ENCODE measurements at regions of chrX and their contacts with region 1.

Region 1: GRCh38 chrX:16771483-16772398 is 14.5 kb upstream of the TXLNG start:
- DNase-seq: peak; percentile 86
- ATAC-seq: peak; percentile 91
- H3K4me3 ChIP-seq: peak overlapping the region; percentile 21 to 40 (median 32); a peak in 4 of 6 replicates
- H3K27ac ChIP-seq: peak overlapping the region; percentile 100
- H3K4me1 ChIP-seq: 0 out of 2 replicates have a peak, but pooled peaks cover 12% of the 10 kb centered on the region
- H3K27me3 ChIP-seq: no peaks in the 10 kb centered on the region
- CTCF ChIP-seq: no peak
- EP300 ChIP-seq: peak in 1 of 2 experiments; percentile 16; a peak in 1 of 4 replicates
- POLR2A ChIP-seq: peak; percentile 94 to 99
- RAD21 ChIP-seq: no peak

Region 2: GRCh38 chrX:16670998-16671397 is 100.7 kb before region 1 on chrX:
- CTCF ChIA-PET with region 1: no interaction called
- POLR2A ChIA-PET with region 1: no interaction called
- in situ Hi-C with region 1: no loop called
- intact Hi-C with region 1: no loop called
- DNase-seq: peak; percentile 5
- ATAC-seq: no peak
- H3K4me3 ChIP-seq: no peak overlapping the region
- H3K27ac ChIP-seq: no peak overlapping the region
- H3K4me1 ChIP-seq: no peaks in the 10 kb centered on the region
- H3K27me3 ChIP-seq: no peaks in the 10 kb centered on the region
- CTCF ChIP-seq: peak; percentile 53
- EP300 ChIP-seq: no peak
- POLR2A ChIP-seq: no peak
- RAD21 ChIP-seq: no peak

Region 3: DNA sequence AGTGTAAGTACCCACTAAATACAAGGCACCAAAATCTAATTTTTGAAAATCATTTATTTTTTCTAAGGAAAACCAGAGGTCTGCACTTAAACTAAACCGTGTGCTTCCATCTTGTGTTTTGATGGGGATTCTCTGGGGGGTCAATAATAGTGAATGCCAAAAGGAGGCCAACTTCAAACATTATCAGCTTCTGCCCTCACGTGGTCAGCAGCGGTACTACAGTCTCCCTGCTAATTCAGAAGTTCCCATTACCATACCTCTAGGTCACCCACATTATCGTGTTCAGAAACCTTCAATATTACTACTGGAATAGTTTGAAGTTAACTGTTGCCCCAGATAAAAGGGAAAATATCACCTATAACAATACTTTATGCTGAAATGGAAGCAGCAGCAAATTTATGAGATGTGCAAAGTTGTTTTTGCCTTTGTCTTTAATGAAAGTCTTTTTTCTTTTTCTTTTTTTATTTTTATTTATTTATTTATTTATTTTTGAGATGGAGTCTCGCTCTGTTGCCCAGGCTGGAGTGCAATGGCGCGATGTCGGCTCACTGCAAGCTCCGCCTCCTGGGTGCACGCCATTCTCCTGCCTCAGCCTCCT is 76.6 kb before region 1 on chrX:
- CTCF ChIA-PET with region 1: no interaction called
- POLR2A ChIA-PET with region 1: interaction called, 13 read pairs
- in situ Hi-C with region 1: no loop called
- intact Hi-C with region 1: no loop called
- DNase-seq: peak; percentile 29
- ATAC-seq: peak; percentile 62; the same call in 2 of the 3 replicates
- H3K4me3 ChIP-seq: no peak overlapping the region
- H3K27ac ChIP-seq: no peak overlapping the region
- H3K4me1 ChIP-seq: peaks cover 15% of the 10 kb centered on the region
- H3K27me3 ChIP-seq: no peaks in the 10 kb centered on the region
- CTCF ChIP-seq: peak; percentile 67
- EP300 ChIP-seq: no peak
- POLR2A ChIP-seq: no peak
- RAD21 ChIP-seq: no peak

Region 4: DNA sequence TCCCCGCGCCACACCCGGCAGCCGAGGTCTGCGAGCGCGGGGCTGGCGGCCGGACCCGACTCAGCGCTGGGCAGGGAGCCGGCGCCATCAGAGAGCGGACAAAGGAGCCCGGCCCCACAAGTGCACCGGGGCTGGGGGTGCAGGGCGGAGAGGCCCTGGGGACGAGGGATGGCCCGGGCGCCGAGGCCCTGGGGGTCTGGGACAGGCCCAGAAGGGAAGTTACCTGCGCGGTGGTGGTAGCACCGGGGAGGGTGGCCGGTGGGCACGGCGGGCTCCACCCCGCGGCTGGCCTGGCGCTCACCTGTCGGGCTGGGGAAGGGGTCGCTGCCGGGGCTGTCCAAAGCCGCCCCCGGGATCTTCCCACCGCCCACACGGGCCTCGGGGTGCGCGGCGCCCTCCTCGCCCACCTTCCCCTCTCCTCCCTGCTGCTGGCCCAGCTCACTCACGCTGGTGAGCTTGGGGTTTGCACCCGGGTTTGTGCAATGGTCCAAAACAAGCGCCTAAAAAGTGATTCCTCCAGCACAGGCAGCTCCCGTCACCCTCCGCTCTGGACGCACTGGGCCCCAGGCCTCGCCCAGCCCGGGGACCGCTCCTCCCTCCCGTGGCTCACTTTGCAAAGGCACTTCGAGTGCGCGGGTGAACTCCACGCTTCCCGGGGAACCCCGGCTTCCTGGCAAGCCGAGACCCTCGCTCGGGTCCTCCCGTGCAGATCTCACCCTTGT is 59.5 kb before region 1 on chrX and contains the start of gene CTPS2:
- CTCF ChIA-PET with region 1: no interaction called
- POLR2A ChIA-PET with region 1: interaction called, 23 read pairs
- in situ Hi-C with region 1: no loop called
- intact Hi-C with region 1: no loop called
- DNase-seq: peak; percentile 39
- ATAC-seq: peak; percentile 96
- H3K4me3 ChIP-seq: peak within 1 kb of the TSS; percentile 77 to 81 (median 77)
- H3K27ac ChIP-seq: peak within 1 kb of the TSS; percentile 90
- H3K4me1 ChIP-seq: peaks cover 32% of the 10 kb centered on the region
- H3K27me3 ChIP-seq: no peaks in the 10 kb centered on the region; a peak in 1 of 5 replicates
- CTCF ChIP-seq: no peak
- EP300 ChIP-seq: no peak
- POLR2A ChIP-seq: peak; percentile 59 to 66; a peak in 3 of 4 replicates
- RAD21 ChIP-seq: no peak
- total RNA-seq, gene CTPS2: 26.1 and 32.2 TPM in 2 replicates

Region 5: GRCh38 chrX:16719334-16720084 is 52.2 kb before region 1 on chrX and contains the start of gene SYAP1:
- CTCF ChIA-PET with region 1: no interaction called
- POLR2A ChIA-PET with region 1: interaction called, 72 read pairs
- in situ Hi-C with region 1: no loop called
- intact Hi-C with region 1: no loop called
- DNase-seq: peak; percentile 92
- ATAC-seq: peak; percentile 96
- H3K4me3 ChIP-seq: peak within 1 kb of the TSS; percentile 73 to 87 (median 81)
- H3K27ac ChIP-seq: peak within 1 kb of the TSS; percentile 98
- H3K4me1 ChIP-seq: peaks cover 35% of the 10 kb centered on the region
- H3K27me3 ChIP-seq: no peaks in the 10 kb centered on the region; a peak in 1 of 5 replicates
- CTCF ChIP-seq: 0 out of 2 replicates have a peak, but pooled peaks have one; percentile 10
- EP300 ChIP-seq: no peak
- POLR2A ChIP-seq: peak; percentile 90 to 95
- RAD21 ChIP-seq: 0 out of 2 replicates have a peak, but pooled peaks have one; percentile 11
- total RNA-seq, gene SYAP1: 18.5 and 25.3 TPM in 2 replicates

Region 6: GRCh38 chrX:16743604-16744325 is 28.0 kb before region 1 on chrX:
- CTCF ChIA-PET with region 1: no interaction called
- POLR2A ChIA-PET with region 1: interaction called, 28 read pairs
- in situ Hi-C with region 1: no loop called
- intact Hi-C with region 1: loop called (anchors 1 kb)
- DNase-seq: no peak
- ATAC-seq: peak; percentile 34; the same call in 2 of the 3 replicates
- H3K4me3 ChIP-seq: no peak overlapping the region
- H3K27ac ChIP-seq: no peak overlapping the region
- H3K4me1 ChIP-seq: peaks cover 32% of the 10 kb centered on the region
- H3K27me3 ChIP-seq: no peaks in the 10 kb centered on the region
- CTCF ChIP-seq: peak; percentile 42; the same call in 1 of the 2 replicates
- EP300 ChIP-seq: no peak
- POLR2A ChIP-seq: no peak
- RAD21 ChIP-seq: no peak

Region 7: DNA sequence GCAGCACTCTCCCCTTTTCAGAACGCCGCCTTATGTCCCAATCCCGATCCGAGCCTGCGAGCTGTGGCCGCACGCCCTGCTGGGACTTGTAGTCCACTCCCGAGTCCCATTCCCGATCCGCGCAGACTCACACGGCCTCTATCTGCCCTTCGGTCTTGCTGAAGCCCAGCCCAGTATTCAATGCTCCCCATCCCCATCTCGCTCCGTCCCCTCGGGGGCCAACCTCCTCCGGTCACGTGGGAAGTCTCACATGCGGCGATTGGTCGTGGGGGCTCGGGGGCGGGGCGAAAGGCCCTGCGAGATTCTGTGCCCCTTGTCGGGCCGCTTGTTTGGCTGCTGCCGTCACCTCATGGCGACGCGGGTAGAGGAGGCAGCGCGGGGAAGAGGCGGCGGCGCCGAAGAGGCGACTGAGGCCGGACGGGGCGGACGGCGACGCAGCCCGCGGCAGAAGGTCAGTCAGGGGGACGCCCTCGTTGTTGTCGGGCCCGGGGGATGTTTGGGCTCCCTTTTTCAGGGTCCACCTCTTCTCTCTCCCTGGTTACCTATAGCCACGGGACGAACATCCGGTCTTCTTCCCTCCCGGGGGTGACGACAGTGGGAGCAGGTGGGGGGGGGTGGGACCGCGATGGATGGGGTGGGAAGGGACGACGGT is 14.5 kb after region 1 on chrX and contains the start of gene TXLNG:
- CTCF ChIA-PET with region 1: no interaction called
- POLR2A ChIA-PET with region 1: interaction called, 79 read pairs
- in situ Hi-C with region 1: no loop called
- intact Hi-C with region 1: no loop called
- DNase-seq: peak; percentile 95
- ATAC-seq: peak; percentile 97
- H3K4me3 ChIP-seq: peak within 1 kb of the TSS; percentile 69 to 84 (median 71)
- H3K27ac ChIP-seq: peak within 1 kb of the TSS; percentile 74
- H3K4me1 ChIP-seq: peaks cover 26% of the 10 kb centered on the region
- H3K27me3 ChIP-seq: no peaks in the 10 kb centered on the region
- CTCF ChIP-seq: no peak
- EP300 ChIP-seq: no peak
- POLR2A ChIP-seq: peak; percentile 72 to 80
- RAD21 ChIP-seq: no peak
- total RNA-seq, gene TXLNG: 13.1 and 17.8 TPM in 2 replicates

Region 8: DNA sequence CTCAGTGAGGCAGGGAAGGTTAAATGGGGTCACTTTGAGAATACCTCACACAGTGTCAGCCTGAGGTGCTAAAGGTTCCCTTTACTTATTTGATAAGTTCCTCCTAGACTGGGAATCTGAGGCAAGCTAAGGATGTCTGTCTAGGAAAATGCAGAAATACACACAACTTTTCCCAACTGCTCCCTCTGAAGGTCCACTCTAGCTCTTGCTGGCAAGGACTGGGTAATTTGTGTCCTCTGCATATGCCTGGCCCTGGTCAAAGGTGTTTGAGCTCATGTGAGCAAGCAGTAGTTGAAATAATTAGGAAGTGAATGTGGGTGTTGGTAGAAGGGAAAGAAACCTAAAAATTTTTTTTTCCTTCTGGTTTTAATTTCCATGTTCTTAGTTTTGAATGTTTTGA is 35.8 kb after region 1 on chrX:
- CTCF ChIA-PET with region 1: no interaction called
- POLR2A ChIA-PET with region 1: interaction called, 16 read pairs
- in situ Hi-C with region 1: no loop called
- intact Hi-C with region 1: no loop called
- DNase-seq: no peak
- ATAC-seq: peak; percentile 70
- H3K4me3 ChIP-seq: peak overlapping the region in 2 of 3 experiments; percentile 16 to 40; a peak in 1 of 6 replicates
- H3K27ac ChIP-seq: peak overlapping the region; percentile 48
- H3K4me1 ChIP-seq: peaks cover 18% of the 10 kb centered on the region
- H3K27me3 ChIP-seq: no peaks in the 10 kb centered on the region
- CTCF ChIP-seq: no peak
- EP300 ChIP-seq: no peak
- POLR2A ChIP-seq: no peak
- RAD21 ChIP-seq: no peak